ENCODE measurements at regions of chr12 and their contacts with region 1.

Region 1: GRCh38 chr12:49776413-49776812 is 35.1 kb downstream of the TMBIM6 start:
- DNase-seq: peak; percentile 82
- ATAC-seq: peak; percentile 87

Region 2: GRCh38 chr12:49720214-49720613 is 56.2 kb before region 1 on chr12:
- intact Hi-C with region 1: loop called (anchors 2 kb)
- DNase-seq: no peak
- ATAC-seq: no peak

Region 3: DNA sequence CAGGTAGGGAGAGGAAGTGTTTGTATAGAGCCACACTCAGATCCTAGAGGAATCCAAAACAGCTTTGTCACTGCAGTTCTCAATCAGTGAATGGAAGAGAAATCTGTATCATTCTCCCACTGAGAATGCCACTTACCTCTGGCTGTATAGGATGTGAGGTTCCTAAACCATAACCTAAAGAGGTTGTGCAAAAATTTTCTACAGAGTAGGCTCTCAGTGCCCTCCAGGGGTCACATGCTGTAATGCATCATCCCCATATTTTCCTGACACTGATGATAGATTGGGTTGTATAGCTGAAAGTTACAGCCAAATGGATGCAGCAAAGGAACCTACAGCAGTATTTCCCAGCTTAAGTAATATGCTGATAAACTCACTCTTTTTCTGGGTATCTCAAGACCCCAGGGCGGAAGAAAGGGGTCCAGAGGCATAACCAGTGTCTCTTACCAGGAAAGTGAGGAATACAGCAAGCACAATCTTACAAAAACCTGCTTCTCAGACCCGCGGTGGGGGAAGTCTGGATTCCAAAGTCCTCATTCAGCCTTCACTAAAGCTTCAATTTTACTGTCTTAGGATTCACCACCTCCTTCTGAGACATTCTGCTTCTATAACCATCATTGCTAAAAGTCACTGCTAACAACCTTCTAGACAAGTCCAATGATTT is 62.7 kb after region 1 on chr12:
- intact Hi-C with region 1: loop called (anchors 1 kb)
- DNase-seq: no peak
- ATAC-seq: no peak

Region 4: DNA sequence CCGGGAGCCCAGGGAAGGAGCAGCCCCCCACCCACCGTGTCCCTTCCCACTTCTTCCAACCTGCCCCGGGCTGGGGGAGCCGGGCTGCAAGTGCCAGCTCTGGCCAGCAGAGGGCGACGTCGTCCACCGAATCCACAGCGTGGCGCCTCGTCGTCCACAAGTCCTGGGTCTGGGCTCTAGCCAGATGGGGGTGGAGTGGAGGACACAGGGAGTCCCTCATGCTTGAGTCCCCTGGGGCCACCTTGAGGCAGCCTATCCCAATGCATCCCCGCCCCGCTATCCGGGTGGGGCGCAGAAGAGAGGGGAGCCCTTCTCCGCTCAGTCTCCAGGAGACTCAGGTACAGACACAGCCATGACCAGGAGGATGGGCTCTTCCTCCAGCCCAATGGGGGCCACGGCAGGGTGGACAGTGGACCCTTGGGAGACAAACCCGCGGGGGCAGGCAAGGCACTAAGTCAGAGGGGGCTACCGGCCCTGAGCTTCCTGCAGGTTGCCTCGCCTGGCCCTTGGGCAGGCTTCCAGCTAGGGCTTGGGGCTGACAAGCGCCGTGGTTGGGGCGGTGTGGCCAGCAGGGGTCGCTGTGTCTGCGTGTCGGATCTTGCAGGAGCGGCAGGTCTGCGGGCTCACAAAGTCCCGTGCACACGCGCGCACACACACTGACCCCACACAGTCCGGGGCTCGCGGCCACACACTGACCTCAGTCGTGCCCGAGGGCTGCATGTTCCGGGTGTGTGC is 190.8 kb after region 1 on chr12:
- intact Hi-C with region 1: loop called (anchors 10 kb)
- DNase-seq: peak; percentile 96
- ATAC-seq: peak; percentile 82

Region 5: DNA sequence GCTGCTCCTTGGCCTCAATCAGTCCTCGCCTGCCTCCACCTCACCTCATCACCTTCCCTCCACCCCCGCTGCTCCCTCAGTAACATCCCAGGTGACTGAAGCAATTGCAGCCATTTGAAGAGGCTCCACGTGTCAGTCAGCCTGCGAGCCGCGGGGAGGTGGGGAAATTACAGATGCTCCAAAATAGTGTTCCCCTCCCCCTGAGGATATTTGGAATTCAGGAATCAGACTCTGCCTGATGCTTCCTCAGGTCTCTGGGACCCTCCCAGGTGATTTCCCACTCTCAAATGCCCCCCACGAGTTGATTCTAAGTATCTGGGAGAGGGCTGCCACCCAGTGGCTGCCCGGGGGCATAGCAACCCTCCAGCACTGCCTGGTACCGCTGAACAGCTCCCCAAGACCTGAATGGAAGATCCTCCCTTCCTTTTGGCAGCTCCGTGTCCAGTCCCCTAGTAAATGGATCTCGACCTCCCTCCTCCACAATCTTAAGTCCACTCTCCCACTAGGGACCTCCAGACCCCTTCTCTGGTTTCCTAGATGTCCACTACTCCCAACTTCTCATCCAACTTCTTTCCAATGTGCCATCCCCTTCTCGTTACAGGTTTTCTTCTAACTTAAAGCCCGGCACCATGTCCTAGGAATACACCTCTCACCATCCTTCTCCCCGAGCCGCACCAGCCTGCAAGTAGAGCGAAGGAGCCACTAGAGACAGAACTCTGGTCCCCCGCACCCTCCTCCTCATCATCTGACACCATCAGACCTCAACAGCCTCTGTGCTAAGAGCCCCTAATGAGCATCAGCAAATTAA is 279.6 kb after region 1 on chr12:
- intact Hi-C with region 1: loop called (anchors 5 kb)
- DNase-seq: no peak
- ATAC-seq: peak; percentile 45

Region 6: DNA sequence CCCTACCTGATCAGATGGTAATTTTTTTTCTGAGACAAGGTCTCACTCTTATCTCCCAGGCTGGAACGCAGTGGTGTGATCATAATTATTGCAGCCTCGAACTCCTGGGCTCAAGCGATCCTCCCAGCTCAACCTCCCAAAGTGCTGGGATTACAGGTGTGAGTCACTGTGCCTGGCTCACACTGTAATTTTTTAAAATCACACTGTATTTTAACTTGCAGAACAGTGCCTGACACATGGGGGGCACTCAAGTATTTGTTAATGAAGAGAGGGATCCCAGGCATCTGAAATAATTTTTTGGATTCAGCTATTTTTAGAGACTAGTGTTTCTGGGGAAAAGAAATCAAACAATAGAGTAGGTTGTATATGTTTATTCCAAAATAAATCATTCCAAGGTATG is 485.2 kb after region 1 on chr12:
- intact Hi-C with region 1: no loop called
- DNase-seq: no peak
- ATAC-seq: no peak